SK-N-SH (cell line): ENCODE measurements at regions of chr11 and their contacts with region 1.

Region 1: DNA sequence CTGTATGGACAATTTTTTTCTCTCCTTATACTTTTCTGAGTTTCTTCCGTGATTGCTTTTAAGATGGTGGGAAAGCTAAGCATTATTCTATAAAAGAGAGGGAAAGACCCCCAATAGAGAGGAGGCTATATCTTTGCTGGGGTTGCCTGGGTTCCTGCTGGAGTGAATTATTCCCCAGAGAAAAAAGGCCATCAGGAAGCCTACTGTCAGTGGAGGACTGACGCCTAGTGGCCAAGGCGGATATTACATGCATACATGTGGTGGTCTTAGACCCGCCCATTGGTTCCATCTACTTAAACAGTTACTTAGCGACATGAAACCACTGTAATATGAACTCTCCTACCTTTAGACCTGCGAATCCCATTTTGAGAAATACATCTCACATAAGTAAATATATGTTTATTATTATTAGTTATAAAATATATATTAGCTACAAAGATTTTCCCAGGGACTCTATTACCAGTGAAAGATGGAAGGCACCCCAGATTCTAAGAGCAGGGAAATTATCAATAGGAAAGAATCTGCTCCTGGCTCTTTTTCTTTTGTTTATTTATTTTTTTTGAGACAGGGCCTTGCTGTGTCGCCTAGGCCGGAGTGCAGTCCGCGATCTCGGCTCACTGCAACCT is 15.7 kb upstream of the PGA3 start:
- DNase-seq: peak; percentile 83
- H3K4me3 ChIP-seq: no peak overlapping the region; a peak in 1 of 4 replicates
- H3K27ac ChIP-seq: no peak overlapping the region
- H3K4me1 ChIP-seq: no peaks in the 10 kb centered on the region
- H3K27me3 ChIP-seq: no peaks in the 10 kb centered on the region; the same call in 1 of the 2 replicates
- CTCF ChIP-seq: peak; percentile 85
- EP300 ChIP-seq: no peak
- RAD21 ChIP-seq: peak; percentile 96

Region 2: GRCh38 chr11:60899046-60899936 is 288.3 kb before region 1 on chr11:
- CTCF ChIA-PET with region 1: interaction called, 14 read pairs
- POLR2A ChIA-PET with region 1: no interaction called
- DNase-seq: peak; percentile 69
- H3K4me3 ChIP-seq: no peak overlapping the region; a peak in 1 of 4 replicates
- H3K27ac ChIP-seq: no peak overlapping the region
- H3K4me1 ChIP-seq: peaks cover 0 to 1% of the 10 kb centered on the region in 2 experiments; a peak in 1 of 4 replicates
- H3K27me3 ChIP-seq: no peaks in the 10 kb centered on the region
- CTCF ChIP-seq: peak; percentile 95
- EP300 ChIP-seq: no peak
- RAD21 ChIP-seq: peak; percentile 71

Region 3: DNA sequence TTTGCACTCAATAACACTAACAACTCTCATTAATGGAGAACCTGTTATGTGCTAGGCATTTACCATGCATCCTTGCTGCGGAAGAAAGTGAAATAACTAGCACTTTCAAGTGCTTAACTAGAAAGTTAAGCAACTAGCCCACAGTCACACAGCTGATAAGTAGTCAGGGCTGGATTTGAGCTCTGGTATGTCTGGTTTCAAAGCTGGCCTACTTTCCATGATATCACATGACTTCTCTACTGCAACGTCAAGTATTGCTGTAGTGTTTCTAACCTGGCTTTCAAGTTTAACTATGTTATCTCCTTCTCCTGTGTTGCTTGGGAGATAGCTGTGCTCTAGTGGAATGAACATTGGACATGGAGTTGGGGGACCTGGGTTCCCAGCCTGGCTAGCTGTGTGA is 247.8 kb before region 1 on chr11:
- CTCF ChIA-PET with region 1: interaction called, 11 read pairs
- POLR2A ChIA-PET with region 1: no interaction called
- DNase-seq: no peak
- H3K4me3 ChIP-seq: no peak overlapping the region
- H3K27ac ChIP-seq: no peak overlapping the region
- H3K4me1 ChIP-seq: no peaks in the 10 kb centered on the region; a peak in 1 of 4 replicates
- H3K27me3 ChIP-seq: no peaks in the 10 kb centered on the region
- CTCF ChIP-seq: no peak
- EP300 ChIP-seq: no peak
- RAD21 ChIP-seq: no peak

Region 4: DNA sequence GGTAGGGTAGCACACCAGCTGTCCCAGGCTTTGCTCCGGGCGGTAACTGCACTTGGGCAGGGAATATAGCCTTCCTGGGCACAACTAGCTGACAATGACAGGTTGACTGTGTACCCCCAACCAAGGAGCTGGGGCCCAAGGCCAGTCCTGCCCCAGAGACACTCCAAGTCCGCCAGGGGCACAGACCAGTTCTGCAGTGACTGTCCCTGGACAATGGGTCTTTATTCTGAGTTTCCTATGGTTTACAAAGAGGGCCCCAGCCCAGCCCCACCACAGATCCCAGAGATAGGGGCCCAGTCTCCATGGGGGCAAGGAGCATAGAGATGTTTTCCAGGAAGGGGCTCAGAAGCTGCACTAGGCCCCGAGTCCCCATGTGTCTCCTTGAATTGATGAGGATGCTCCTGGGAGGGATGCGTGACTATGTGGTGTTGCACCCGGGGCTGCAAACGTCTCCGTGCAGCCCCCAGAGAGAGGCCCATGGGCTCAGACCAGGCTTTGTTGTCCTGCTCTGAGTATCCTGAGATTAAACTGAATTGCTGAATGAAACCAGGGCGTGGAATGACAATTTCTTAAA is 167.7 kb before region 1 on chr11:
- CTCF ChIA-PET with region 1: no interaction called
- POLR2A ChIA-PET with region 1: no interaction called
- DNase-seq: no peak
- H3K4me3 ChIP-seq: no peak overlapping the region
- H3K27ac ChIP-seq: no peak overlapping the region
- H3K4me1 ChIP-seq: no peaks in the 10 kb centered on the region; a peak in 1 of 4 replicates
- H3K27me3 ChIP-seq: no peaks in the 10 kb centered on the region
- CTCF ChIP-seq: no peak
- EP300 ChIP-seq: no peak
- RAD21 ChIP-seq: no peak

Region 5: DNA sequence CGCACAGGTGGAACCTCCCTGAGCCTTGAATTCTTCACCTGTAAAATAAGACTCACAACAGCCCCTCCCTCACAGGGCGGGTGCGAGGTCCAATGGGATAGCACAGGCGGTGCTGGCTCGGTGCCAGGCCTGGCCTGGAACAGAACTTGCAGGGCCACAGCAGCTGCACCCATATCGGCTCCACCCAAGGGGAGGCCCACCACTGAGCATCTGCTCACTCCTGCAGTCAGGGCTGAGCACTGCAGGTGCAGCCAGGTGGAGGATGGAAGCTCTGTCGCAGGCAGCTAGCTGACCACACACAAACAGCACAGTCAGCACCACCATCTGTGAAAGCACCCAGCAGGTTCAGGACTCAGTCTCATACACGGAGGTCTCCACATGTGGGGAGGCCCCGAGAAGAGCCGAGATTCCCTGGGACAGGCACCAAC is 46.0 kb before region 1 on chr11:
- CTCF ChIA-PET with region 1: interaction called, 14 read pairs
- POLR2A ChIA-PET with region 1: no interaction called
- DNase-seq: no peak
- H3K4me3 ChIP-seq: no peak overlapping the region
- H3K27ac ChIP-seq: no peak overlapping the region
- H3K4me1 ChIP-seq: peaks cover 0 to 4% of the 10 kb centered on the region in 2 experiments; a peak in 2 of 4 replicates
- H3K27me3 ChIP-seq: no peaks in the 10 kb centered on the region
- CTCF ChIP-seq: no peak
- EP300 ChIP-seq: no peak
- RAD21 ChIP-seq: no peak

Region 6: GRCh38 chr11:61161190-61162091 is 26.2 kb before region 1 on chr11 and contains the start of gene VPS37C:
- CTCF ChIA-PET with region 1: interaction called, 20 read pairs
- POLR2A ChIA-PET with region 1: interaction called, 4 read pairs
- DNase-seq: peak; percentile 98
- H3K4me3 ChIP-seq: peak within 1 kb of the TSS; percentile 66 to 70
- H3K27ac ChIP-seq: peak within 1 kb of the TSS; percentile 85 to 94
- H3K4me1 ChIP-seq: peaks cover 0 to 22% of the 10 kb centered on the region in 2 experiments; a peak in 3 of 4 replicates
- H3K27me3 ChIP-seq: no peaks in the 10 kb centered on the region
- CTCF ChIP-seq: no peak
- EP300 ChIP-seq: no peak
- RAD21 ChIP-seq: no peak
- polyA plus RNA-seq, gene VPS37C: 11.7 and 15.2 TPM in 2 replicates